MCF 10A (cell line): ENCODE measurements at regions of chr20 and their contacts with region 1.

Region 1: DNA sequence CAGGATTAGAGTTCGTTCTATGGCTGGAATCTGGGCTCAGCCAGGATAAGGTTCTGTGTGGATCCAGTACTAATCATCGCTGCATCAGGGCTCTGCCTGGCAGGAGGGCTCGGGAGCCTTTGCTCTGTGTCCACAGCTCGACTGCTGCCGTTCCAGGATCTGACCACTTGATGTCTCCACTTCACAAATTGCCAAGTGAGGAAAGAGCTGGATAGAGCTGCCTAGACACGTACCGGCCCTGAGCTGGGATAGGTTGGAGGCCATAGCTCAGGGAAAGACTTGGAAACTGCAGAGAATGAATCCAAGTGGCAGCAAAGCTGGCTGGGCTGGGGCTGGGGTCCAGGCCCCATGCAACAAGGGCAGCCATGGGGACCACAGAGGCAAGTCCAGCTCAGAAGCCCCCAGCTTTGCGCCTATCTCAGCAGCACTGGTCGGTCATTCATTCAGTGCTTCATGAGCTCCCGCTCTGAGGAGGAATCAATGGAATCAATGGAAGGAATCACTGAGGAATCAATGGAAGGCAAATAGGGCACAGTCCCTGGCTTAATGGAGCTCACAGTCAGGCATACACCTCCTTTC is 38.0 kb upstream of the TOP1 start:
- DNase-seq: peak; percentile 91
- H3K4me3 Mint-ChIP-seq: no peak overlapping the region
- H3K27ac Mint-ChIP-seq: peak overlapping the region; percentile 88
- H3K4me1 Mint-ChIP-seq: peaks cover 15% of the 10 kb centered on the region
- H3K27me3 Mint-ChIP-seq: no peaks in the 10 kb centered on the region
- CTCF ChIP-seq: peak; percentile 71

Region 2: GRCh38 chr20:40962730-40963504 is 27.7 kb before region 1 on chr20:
- CTCF ChIA-PET with region 1: interaction called, 287 read pairs
- POLR2A ChIA-PET with region 1: no interaction called
- intact Hi-C with region 1: no loop called
- DNase-seq: peak; percentile 71
- H3K4me3 Mint-ChIP-seq: no peak overlapping the region
- H3K27ac Mint-ChIP-seq: no peak overlapping the region
- H3K4me1 Mint-ChIP-seq: peaks cover 20% of the 10 kb centered on the region
- H3K27me3 Mint-ChIP-seq: no peaks in the 10 kb centered on the region
- CTCF ChIP-seq: peak; percentile 84

Region 3: DNA sequence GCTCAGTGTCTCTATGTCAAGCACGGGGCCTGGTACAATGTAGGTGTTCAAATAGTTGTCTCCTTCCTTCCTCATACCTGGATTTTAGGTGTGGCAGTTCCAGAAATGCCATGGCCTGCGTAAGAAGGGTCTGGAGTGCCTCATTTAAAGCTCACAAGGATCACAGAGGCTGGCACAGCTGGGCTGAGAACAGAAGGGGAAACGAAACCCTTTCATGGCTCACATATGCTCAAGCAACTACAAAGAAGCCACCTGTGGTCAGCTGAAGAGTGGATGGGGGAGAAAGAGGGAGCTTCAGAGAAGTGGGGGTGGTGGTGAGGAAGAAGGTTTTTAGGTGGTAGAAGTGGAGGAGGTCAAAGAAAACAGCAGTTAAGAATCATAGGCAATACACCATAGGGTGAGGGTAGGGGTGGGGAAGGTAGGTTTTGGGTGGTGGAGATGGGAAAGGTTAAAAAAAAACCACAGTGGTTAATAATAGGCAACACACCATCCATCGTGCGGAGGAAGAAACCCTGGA is 21.0 kb after region 1 on chr20:
- CTCF ChIA-PET with region 1: interaction called, 34 read pairs
- POLR2A ChIA-PET with region 1: interaction called, 11 read pairs
- intact Hi-C with region 1: no loop called
- DNase-seq: no peak
- H3K4me3 Mint-ChIP-seq: no peak overlapping the region
- H3K27ac Mint-ChIP-seq: no peak overlapping the region
- H3K4me1 Mint-ChIP-seq: peaks cover 23% of the 10 kb centered on the region
- H3K27me3 Mint-ChIP-seq: no peaks in the 10 kb centered on the region
- CTCF ChIP-seq: no peak

Region 4: DNA sequence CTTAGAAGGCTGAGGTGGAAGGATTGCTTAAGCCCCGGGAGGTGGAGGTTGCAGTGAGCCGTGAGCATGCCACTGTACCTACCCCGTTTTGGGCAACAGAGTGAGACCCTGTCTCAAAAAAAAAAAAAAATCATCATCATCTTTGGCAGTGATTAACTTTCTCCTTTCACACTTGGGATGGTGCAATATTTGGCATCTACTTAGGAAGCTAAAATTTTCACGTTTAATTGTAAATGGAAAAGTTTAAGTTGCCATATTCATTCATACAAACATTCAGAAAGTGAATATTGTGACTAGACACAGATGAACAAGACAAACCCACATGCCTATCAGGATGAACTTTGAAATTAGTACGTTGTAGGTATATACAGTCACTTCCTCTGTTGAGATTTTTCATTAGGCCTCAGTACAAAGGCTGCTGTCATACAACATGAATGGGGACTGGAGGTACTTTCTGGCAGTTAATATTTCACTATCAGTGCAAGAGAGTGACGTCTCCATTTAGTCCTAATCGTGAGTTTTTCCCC is 48.3 kb after region 1 on chr20:
- CTCF ChIA-PET with region 1: interaction called, 88 read pairs
- POLR2A ChIA-PET with region 1: interaction called, 5 read pairs
- intact Hi-C with region 1: no loop called
- DNase-seq: no peak
- H3K4me3 Mint-ChIP-seq: no peak overlapping the region
- H3K27ac Mint-ChIP-seq: no peak overlapping the region
- H3K4me1 Mint-ChIP-seq: peaks cover 26% of the 10 kb centered on the region
- H3K27me3 Mint-ChIP-seq: no peaks in the 10 kb centered on the region
- CTCF ChIP-seq: no peak

Region 5: GRCh38 chr20:41063438-41063837 is 72.8 kb after region 1 on chr20:
- CTCF ChIA-PET with region 1: interaction called, 22 read pairs
- POLR2A ChIA-PET with region 1: interaction called, 3 read pairs
- intact Hi-C with region 1: no loop called
- DNase-seq: no peak
- H3K4me3 Mint-ChIP-seq: no peak overlapping the region
- H3K27ac Mint-ChIP-seq: peak overlapping the region; percentile 42
- H3K4me1 Mint-ChIP-seq: peaks cover 27% of the 10 kb centered on the region
- H3K27me3 Mint-ChIP-seq: no peaks in the 10 kb centered on the region
- CTCF ChIP-seq: no peak

Region 6: DNA sequence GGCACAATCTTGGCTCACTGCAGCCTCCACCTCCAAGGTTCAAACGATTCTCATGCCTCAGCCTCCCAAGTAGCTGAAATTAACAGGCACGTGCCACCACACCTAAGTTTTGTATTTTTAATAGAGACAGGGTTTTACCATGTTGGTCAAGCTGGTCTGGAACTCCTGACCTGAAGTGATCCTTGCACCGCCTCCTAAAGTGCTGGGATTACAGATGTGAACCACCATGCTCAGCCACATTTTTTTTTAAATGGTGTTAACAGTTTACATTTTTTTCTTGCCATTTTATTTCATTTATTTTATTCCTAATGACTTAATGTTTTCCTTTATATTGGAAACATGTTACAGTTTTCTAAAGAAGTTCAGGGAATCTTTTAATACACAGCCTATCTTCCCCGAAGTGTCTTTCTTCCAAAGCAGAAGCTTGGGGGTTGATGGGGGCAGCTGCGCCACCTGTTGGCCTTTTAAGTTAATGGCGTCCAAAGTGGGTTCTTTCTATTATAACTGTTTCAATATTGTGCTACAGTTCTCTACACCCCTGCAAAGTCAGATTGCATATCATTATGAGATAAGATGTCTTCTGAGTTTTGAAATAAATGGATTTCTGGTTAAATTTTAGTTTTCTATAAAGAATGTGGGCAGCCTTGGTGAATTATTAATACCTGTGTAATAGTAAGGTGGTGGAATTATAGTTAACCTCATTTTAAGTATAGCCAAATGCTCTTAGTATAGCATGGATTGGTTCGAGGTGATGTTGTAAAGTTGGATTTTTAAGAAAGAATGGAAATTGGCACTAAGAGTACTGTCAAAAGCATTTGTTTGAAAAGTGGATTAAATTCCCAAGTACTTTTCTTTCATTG is 104.7 kb after region 1 on chr20:
- CTCF ChIA-PET with region 1: interaction called, 616 read pairs
- POLR2A ChIA-PET with region 1: interaction called, 30 read pairs
- intact Hi-C with region 1: loop called (anchors 1 kb)
- DNase-seq: peak; percentile 63
- H3K4me3 Mint-ChIP-seq: no peak overlapping the region
- H3K27ac Mint-ChIP-seq: no peak overlapping the region
- H3K4me1 Mint-ChIP-seq: peaks cover 6% of the 10 kb centered on the region
- H3K27me3 Mint-ChIP-seq: no peaks in the 10 kb centered on the region
- CTCF ChIP-seq: peak; percentile 82

Region 7: GRCh38 chr20:41136680-41137613 is 146.3 kb after region 1 on chr20 and contains the start of gene PLCG1:
- CTCF ChIA-PET with region 1: interaction called, 33 read pairs
- POLR2A ChIA-PET with region 1: interaction called, 5 read pairs
- intact Hi-C with region 1: no loop called
- DNase-seq: peak; percentile 83
- H3K4me3 Mint-ChIP-seq: peak within 1 kb of the TSS; percentile 79
- H3K27ac Mint-ChIP-seq: peak within 1 kb of the TSS; percentile 42
- H3K4me1 Mint-ChIP-seq: peaks cover 61% of the 10 kb centered on the region
- H3K27me3 Mint-ChIP-seq: no peaks in the 10 kb centered on the region
- CTCF ChIP-seq: no peak
- total RNA-seq, gene PLCG1: 33.2 and 48.1 TPM in 2 replicates